ENCODE measurements at regions of chr18 and their contacts with region 1.

Region 1: DNA sequence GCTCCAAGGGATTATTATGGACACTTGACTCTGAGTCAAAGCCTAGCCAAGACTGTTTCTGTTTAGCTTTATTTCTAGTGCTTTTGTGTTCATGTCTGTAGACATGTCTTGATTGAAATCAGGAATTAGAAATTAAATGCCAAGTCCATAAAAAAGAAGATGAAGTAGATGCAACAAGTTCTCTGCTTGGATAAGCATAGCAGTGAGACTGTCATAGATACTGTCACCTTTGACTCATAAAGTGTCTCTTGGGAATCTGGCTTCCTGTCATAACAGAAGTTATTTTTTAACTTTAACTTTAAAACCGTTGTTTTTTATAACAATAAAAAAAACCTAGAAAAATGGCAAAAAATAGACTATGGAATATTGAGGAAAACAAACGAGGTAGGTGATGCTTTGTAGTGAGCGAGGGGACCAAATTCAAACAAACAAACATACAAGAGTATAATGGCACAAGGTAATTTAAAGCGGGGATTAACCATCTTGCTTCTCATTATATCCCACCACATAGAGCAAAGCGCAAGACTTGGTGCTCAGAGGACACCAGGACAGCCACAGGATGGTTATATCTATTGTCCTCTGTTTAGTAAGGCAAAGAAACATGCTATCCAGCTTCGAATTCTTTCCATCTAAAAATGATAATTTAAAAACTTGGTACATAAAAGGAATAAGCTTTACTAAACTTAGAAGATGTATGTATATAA is 64.6 kb downstream of the CD226 start:
- DNase-seq: no peak
- H3K4me3 ChIP-seq: no peak overlapping the region
- H3K27ac ChIP-seq: peak overlapping the region in 2 of 4 donors; percentile 23 to 43
- H3K4me1 ChIP-seq: peaks cover 0 to 44% (median 20%) of the 10 kb centered on the region in 4 donors
- H3K27me3 ChIP-seq: no peaks in the 10 kb centered on the region
- CTCF ChIP-seq: no peak
- EP300 ChIP-seq: no peak
- POLR2A ChIP-seq: no peak

Region 2: DNA sequence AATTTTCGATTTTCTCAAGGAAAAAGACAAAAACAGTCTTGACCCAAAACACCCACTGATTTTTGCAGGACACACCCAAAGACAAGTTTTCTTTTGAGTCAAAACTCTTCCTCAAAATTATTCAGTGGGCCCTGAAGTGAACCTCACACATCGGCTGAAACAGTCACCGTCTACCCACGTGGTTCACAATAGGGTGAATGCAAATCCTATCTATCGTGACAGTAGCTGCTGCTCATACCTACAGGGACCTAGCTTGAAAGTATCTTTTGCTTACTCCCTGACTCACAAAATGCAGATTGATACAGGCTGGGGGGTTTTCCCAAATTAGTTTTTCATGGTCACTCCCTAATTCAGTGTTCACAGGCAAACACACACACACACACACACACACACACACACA is 75.3 kb after region 1 on chr18:
- intact Hi-C with region 1: loop called (anchors 5 kb)
- DNase-seq: no peak
- H3K4me3 ChIP-seq: no peak overlapping the region
- H3K27ac ChIP-seq: no peak overlapping the region
- H3K4me1 ChIP-seq: peaks cover 0 to 11% (median 5%) of the 10 kb centered on the region in 4 donors
- H3K27me3 ChIP-seq: no peaks in the 10 kb centered on the region
- CTCF ChIP-seq: no peak
- EP300 ChIP-seq: no peak
- POLR2A ChIP-seq: no peak

Measured in sigmoid colon (tissue), 7 donors.